ENCODE measurements at regions of chr14 and their contacts with region 1.

Region 1: DNA sequence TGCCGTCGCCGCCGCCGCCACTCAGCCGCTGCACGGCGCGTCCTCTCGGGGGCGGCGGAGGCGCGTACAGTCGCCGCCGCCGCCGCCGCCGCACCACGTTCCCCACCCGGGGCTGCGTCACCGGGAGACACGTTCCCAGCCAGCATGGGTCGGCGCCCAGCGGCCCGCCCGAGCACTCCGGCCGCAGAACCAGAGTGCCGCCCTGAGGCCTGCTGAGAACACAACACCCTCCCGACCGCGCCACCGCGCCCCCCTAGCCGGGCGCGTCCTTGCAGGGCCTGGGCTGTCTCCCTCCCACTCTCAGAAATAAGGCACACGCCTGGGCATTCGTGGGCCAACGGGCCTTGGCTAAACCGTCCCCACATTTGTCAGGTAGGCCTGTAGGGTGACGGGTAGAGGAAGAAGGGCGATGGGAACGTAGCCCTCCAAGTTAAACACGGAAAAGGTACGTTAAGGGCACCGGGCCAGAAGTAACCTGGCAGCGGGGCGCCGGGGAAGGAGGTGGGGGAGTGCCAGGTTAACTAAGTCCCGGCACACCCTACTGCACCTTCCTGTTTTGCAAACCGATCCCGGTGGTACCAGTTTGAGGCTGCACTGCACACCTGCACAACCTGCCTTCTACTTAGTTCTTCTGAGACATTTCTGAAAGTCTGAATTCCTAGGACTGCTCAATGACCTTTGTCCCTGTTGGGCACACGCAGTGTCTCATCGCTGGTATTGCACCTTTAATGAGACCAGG is at the start of gene MAP4K5:
- DNase-seq: peak; percentile 94
- H3K4me3 Mint-ChIP-seq: peak within 1 kb of the TSS; percentile 67
- H3K27ac Mint-ChIP-seq: peak within 1 kb of the TSS; percentile 70
- H3K4me1 Mint-ChIP-seq: peaks cover 31% of the 10 kb centered on the region
- H3K27me3 Mint-ChIP-seq: no peaks in the 10 kb centered on the region
- CTCF ChIP-seq: peak; percentile 87
- total RNA-seq, gene MAP4K5: 67.4 and 69.0 TPM in 2 replicates

Region 2: DNA sequence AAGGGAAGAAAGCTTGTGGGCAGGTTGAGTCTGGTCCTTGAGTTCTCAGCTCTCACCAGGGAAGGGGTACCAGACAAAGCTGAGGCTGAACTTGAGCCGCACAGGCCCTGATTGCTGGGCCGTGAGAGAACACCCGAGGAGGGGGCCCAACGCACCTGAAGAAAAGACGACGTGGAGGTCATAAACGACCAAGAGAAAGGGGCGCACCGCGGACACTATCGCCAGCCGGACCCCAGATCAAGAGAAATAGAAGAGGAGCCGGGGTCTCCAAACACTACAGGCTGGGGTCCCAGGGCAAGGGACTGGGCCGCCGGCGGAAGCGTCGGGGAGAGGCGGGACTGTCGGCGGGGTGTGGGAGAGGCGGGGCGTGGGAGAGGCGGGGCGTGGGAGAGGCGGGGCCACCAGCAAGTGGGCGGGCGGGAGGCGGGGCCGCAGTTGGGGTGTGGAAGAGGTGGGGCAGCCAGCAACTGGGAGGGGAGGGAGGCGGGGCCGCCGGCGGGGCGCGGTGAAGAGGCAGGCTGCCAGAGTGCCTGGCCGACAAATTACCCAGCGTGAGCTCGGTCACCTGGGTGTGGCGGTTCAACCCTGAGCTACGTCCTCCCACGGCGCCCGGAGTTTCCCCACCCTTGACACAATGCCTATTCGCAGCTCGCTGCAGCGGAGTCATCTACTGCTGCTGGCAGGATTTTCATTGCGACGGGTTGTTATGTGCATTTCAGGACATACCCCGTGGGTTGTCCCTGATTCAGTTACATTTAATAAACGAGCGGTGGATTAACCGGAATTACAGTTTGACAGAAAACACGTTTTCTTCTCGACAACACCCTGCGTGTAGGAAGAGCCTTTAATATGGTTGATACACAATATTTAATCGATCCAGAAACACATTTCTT is 664.6 kb before region 1 on chr14:
- CTCF ChIA-PET with region 1: no interaction called
- intact Hi-C with region 1: loop called (anchors 10 kb)
- DNase-seq: peak; percentile 96
- H3K4me3 Mint-ChIP-seq: peak overlapping the region; percentile 82
- H3K27ac Mint-ChIP-seq: peak overlapping the region; percentile 76
- H3K4me1 Mint-ChIP-seq: peaks cover 8% of the 10 kb centered on the region
- H3K27me3 Mint-ChIP-seq: no peaks in the 10 kb centered on the region
- CTCF ChIP-seq: no peak

Region 3: GRCh38 chr14:50116181-50116956 is 416.3 kb before region 1 on chr14 and contains the start of gene VCPKMT:
- CTCF ChIA-PET with region 1: no interaction called
- intact Hi-C with region 1: loop called (anchors 10 kb)
- DNase-seq: peak; percentile 95
- H3K4me3 Mint-ChIP-seq: peak within 1 kb of the TSS; percentile 90
- H3K27ac Mint-ChIP-seq: peak within 1 kb of the TSS; percentile 90
- H3K4me1 Mint-ChIP-seq: peaks cover 8% of the 10 kb centered on the region
- H3K27me3 Mint-ChIP-seq: no peaks in the 10 kb centered on the region
- CTCF ChIP-seq: no peak
- total RNA-seq, gene VCPKMT: 7.1 and 8.8 TPM in 2 replicates

Region 4: GRCh38 chr14:50321009-50321660 is 211.5 kb before region 1 on chr14:
- CTCF ChIA-PET with region 1: interaction called, 9 read pairs
- intact Hi-C with region 1: loop called (anchors 1 kb)
- DNase-seq: peak; percentile 65
- H3K4me3 Mint-ChIP-seq: no peak overlapping the region
- H3K27ac Mint-ChIP-seq: no peak overlapping the region
- H3K4me1 Mint-ChIP-seq: peaks cover 14% of the 10 kb centered on the region
- H3K27me3 Mint-ChIP-seq: no peaks in the 10 kb centered on the region
- CTCF ChIP-seq: peak; percentile 49

Region 5: DNA sequence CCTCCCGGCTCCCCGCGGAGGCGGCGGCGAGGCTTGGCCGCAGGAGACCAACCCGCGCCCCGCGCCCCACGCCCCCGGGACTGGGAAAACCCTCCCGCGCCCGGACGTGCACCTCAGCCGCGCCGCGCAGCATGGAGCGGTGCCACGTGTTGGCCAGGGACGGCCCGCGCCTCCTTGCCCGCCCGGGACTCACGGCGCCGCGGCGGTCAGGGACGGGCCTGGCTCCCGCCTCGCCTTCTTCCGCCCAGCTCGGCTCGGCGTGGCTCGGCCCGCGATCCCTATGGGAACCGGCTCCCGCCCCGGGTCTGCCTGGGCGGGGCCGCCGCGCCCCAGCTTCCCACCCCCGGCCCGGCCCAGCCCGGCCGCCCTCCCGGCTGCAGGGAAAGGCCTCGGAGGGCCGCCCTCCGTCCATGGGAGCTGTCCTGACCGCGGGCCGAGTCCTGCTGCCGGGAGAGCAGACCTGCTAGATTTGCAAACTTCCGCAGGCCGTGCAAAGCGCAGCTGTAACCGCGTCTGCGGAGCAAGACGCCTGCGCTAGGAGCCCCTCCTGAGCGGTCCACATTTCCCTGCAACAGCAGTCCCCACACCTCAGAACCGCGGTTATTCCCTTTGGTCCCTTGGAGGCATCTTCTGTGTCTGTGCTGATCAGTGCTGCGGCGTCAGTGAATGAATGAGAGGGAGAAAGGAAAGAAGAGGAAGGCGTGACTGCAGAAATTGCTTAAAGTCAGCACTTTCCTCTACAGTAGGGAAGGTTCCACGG is 135.9 kb before region 1 on chr14 and contains the start of gene CDKL1:
- CTCF ChIA-PET with region 1: no interaction called
- intact Hi-C with region 1: loop called (anchors 5 kb)
- DNase-seq: peak; percentile 63
- H3K4me3 Mint-ChIP-seq: peak within 1 kb of the TSS; percentile 77
- H3K27ac Mint-ChIP-seq: peak within 1 kb of the TSS; percentile 73
- H3K4me1 Mint-ChIP-seq: no peaks in the 10 kb centered on the region
- H3K27me3 Mint-ChIP-seq: no peaks in the 10 kb centered on the region
- CTCF ChIP-seq: no peak
- total RNA-seq, gene CDKL1: 3.0 and 3.7 TPM in 2 replicates

Region 6: GRCh38 chr14:50447461-50447860 is 85.2 kb before region 1 on chr14:
- CTCF ChIA-PET with region 1: no interaction called
- intact Hi-C with region 1: loop called (anchors 5 kb)
- DNase-seq: no peak
- H3K4me3 Mint-ChIP-seq: no peak overlapping the region
- H3K27ac Mint-ChIP-seq: no peak overlapping the region
- H3K4me1 Mint-ChIP-seq: no peaks in the 10 kb centered on the region
- H3K27me3 Mint-ChIP-seq: no peaks in the 10 kb centered on the region
- CTCF ChIP-seq: no peak